CD14-positive monocyte (primary cell): ENCODE measurements at regions of chr2 and their contacts with region 1.

Region 1: GRCh38 chr2:40448468-40449079 is 3.3 kb downstream of the SLC8A1 start:
- DNase-seq: peak; percentile 21 to 61 (median 57)
- H3K4me3 ChIP-seq: peak overlapping the region in 1 of 3 experiments; percentile 5
- H3K4me3 Mint-ChIP-seq: no peak overlapping the region
- H3K27ac ChIP-seq: peak overlapping the region in 1 of 2 donors; percentile 85
- H3K27ac Mint-ChIP-seq: peak overlapping the region in 6 of 7 donors; percentile 33 to 84 (median 76)
- H3K4me1 ChIP-seq: peaks cover 58 to 73% of the 10 kb centered on the region in 2 donors
- H3K4me1 Mint-ChIP-seq: peaks cover 69% of the 10 kb centered on the region
- H3K27me3 ChIP-seq: no peaks in the 10 kb centered on the region
- H3K27me3 Mint-ChIP-seq: peaks cover 0 to 2% (median 1%) of the 10 kb centered on the region in 3 donors
- CTCF ChIP-seq: peak; percentile 66

Region 2: GRCh38 chr2:40360652-40361051 is 87.9 kb before region 1 on chr2:
- intact Hi-C with region 1: no loop called
- DNase-seq: no peak
- H3K4me3 ChIP-seq: no peak overlapping the region
- H3K4me3 Mint-ChIP-seq: no peak overlapping the region
- H3K27ac ChIP-seq: no peak overlapping the region
- H3K27ac Mint-ChIP-seq: no peak overlapping the region
- H3K4me1 ChIP-seq: peaks cover 6 to 17% of the 10 kb centered on the region in 2 donors
- H3K4me1 Mint-ChIP-seq: peaks cover 25% of the 10 kb centered on the region
- H3K27me3 ChIP-seq: no peaks in the 10 kb centered on the region
- H3K27me3 Mint-ChIP-seq: no peaks in the 10 kb centered on the region
- CTCF ChIP-seq: no peak

Region 3: DNA sequence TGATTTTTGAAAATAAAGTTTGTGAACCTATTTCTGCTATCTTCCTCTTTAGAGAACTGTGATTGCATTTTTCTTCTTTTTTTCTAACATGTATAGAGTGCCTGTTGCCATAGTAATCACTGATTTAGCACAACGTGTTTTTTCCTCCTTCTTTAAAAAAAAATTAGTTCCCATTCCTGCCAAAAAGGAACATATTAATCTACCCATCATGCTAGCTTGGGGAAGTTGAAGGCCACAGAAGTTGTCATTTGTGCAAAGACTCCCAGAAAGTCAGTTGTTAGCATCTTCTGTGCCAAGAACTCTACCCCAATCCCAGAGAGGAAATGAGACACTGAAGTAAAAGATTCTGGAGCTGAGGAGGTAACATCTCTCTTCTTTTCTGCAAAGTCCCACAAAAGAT is 54.0 kb before region 1 on chr2:
- intact Hi-C with region 1: loop called in 1 of 2 experiments (anchors 10 kb)
- DNase-seq: peak; percentile 54 to 74 (median 60)
- H3K4me3 ChIP-seq: peak overlapping the region in 1 of 3 experiments; percentile 35
- H3K4me3 Mint-ChIP-seq: peak overlapping the region in 1 of 2 donors; percentile 32
- H3K27ac ChIP-seq: peak overlapping the region; percentile 42 to 85
- H3K27ac Mint-ChIP-seq: peak overlapping the region; percentile 83 to 96 (median 91)
- H3K4me1 ChIP-seq: peaks cover 40 to 59% of the 10 kb centered on the region in 2 donors
- H3K4me1 Mint-ChIP-seq: peaks cover 67% of the 10 kb centered on the region
- H3K27me3 ChIP-seq: no peaks in the 10 kb centered on the region
- H3K27me3 Mint-ChIP-seq: peaks cover 0 to 2% (median 0%) of the 10 kb centered on the region in 3 donors
- CTCF ChIP-seq: no peak

Region 4: GRCh38 chr2:40412456-40412855 is 36.1 kb before region 1 on chr2:
- intact Hi-C with region 1: no loop called
- DNase-seq: no peak
- H3K4me3 ChIP-seq: no peak overlapping the region
- H3K4me3 Mint-ChIP-seq: no peak overlapping the region
- H3K27ac ChIP-seq: no peak overlapping the region
- H3K27ac Mint-ChIP-seq: no peak overlapping the region
- H3K4me1 ChIP-seq: no peaks in the 10 kb centered on the region
- H3K4me1 Mint-ChIP-seq: peaks cover 3% of the 10 kb centered on the region
- H3K27me3 ChIP-seq: no peaks in the 10 kb centered on the region
- H3K27me3 Mint-ChIP-seq: peaks cover 0 to 1% (median 0%) of the 10 kb centered on the region in 3 donors
- CTCF ChIP-seq: no peak

Region 5: DNA sequence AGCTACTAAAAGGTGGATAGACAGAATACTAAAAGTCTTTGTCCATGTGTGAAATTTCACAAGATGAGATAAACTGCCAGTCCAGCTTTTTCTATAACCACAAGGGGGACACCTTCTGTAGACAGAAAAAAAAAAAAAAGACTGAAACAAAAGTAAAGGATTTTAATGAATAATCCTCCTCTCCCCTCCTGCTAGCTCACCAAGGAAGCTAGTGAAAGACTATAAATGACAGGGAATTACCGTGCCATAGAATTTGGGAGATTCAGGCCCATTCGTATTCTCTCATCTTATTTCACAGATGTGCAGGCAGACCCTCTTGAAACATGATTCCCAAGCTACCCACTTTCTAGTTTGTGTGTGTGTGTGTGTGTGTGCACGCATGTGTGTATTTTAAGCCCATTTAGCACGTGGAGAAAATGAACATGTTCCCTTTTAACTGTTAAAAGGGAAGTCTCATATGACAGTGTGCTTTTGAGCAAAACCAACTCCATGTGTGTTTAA is 39.6 kb after region 1 on chr2:
- intact Hi-C with region 1: loop called (anchors 5 kb)
- DNase-seq: peak; percentile 43 to 57 (median 52)
- H3K4me3 ChIP-seq: peak overlapping the region in 1 of 3 experiments; percentile 71
- H3K4me3 Mint-ChIP-seq: no peak overlapping the region
- H3K27ac ChIP-seq: peak overlapping the region in 1 of 2 donors; percentile 79
- H3K27ac Mint-ChIP-seq: peak overlapping the region; percentile 84 to 96 (median 91)
- H3K4me1 ChIP-seq: peaks cover 51 to 66% of the 10 kb centered on the region in 2 donors
- H3K4me1 Mint-ChIP-seq: peaks cover 60% of the 10 kb centered on the region
- H3K27me3 ChIP-seq: no peaks in the 10 kb centered on the region
- H3K27me3 Mint-ChIP-seq: peaks cover 0 to 1% (median 0%) of the 10 kb centered on the region in 3 donors
- CTCF ChIP-seq: peak; percentile 41

Region 6: DNA sequence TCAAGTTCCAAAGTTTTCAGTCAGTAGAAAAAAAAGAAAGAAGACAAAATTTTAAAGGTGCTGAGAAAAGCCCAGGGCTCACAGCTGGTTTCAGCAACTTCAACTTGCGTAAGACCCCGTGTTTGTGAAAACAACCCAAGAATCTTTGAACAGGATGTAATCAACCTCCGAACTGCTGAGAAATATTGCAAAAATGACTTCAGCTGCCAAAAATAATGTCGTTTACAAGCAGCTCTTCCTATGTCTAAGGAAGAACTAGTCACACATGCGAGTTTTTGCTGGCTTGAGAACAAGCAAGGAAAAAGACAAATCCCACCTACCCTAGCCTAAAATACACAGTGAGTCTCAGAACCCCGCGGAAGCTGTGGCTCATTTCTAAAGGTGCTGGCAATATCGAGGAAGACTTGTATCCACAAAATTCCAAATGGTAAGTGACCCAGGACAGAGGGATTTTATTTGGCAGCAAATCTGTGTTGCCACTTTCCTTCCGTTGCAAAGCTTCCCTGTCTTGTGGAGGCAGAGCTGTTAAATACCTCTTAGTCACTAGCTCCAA is 63.2 kb after region 1 on chr2:
- intact Hi-C with region 1: loop called in 1 of 2 experiments (anchors 5 kb)
- DNase-seq: peak; percentile 40 to 51 (median 51)
- H3K4me3 ChIP-seq: peak overlapping the region; percentile 32 to 72 (median 65)
- H3K4me3 Mint-ChIP-seq: peak overlapping the region; percentile 75 to 87
- H3K27ac ChIP-seq: peak overlapping the region; percentile 64 to 79
- H3K27ac Mint-ChIP-seq: peak overlapping the region; percentile 86 to 98 (median 95)
- H3K4me1 ChIP-seq: peaks cover 39 to 56% of the 10 kb centered on the region in 2 donors
- H3K4me1 Mint-ChIP-seq: peaks cover 53% of the 10 kb centered on the region
- H3K27me3 ChIP-seq: no peaks in the 10 kb centered on the region
- H3K27me3 Mint-ChIP-seq: peaks cover 0 to 2% (median 0%) of the 10 kb centered on the region in 3 donors
- CTCF ChIP-seq: no peak

Region 7: GRCh38 chr2:40554668-40555285 is 106.2 kb after region 1 on chr2:
- intact Hi-C with region 1: loop called (anchors 5 to 10 kb)
- DNase-seq: peak; percentile 61 to 76 (median 64)
- H3K4me3 ChIP-seq: no peak overlapping the region
- H3K4me3 Mint-ChIP-seq: no peak overlapping the region
- H3K27ac ChIP-seq: no peak overlapping the region
- H3K27ac Mint-ChIP-seq: no peak overlapping the region
- H3K4me1 ChIP-seq: peaks cover 26 to 32% of the 10 kb centered on the region in 2 donors
- H3K4me1 Mint-ChIP-seq: peaks cover 34% of the 10 kb centered on the region
- H3K27me3 ChIP-seq: no peaks in the 10 kb centered on the region
- H3K27me3 Mint-ChIP-seq: peaks cover 0 to 2% (median 2%) of the 10 kb centered on the region in 3 donors
- CTCF ChIP-seq: peak; percentile 94